ENCODE measurements at regions of chr5 and their contacts with region 1.

Region 1: DNA sequence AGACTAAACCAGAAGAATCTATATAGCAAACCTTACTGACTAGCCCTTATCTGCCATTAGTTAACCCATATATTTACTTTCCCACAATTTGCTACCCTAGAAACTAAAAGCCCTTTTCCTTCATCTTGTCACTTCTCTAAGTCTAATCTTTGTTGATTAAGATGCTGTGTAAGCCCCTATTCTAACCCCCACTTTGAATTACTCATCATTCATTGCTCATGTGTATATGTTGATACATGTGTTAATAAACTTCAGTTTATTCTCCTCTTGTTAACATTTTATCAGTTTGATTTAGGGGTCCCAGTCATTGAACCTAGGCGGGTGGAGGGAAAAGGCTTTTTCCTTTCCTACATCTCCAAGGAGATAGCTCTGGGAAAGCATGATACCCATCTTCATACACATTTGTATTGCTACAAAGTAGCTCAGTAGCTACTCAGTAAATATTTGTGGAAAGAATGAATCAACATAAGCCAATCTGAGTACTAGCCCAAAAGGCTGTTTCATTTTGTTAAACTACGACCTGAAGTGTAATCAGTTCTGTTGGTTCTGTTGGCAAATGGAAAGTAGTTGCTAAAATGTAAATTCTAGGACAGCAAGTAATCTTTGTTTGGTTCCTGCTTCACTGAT is 35.1 kb upstream of the NDFIP1 start:
- DNase-seq: no peak
- H3K4me3 ChIP-seq: no peak overlapping the region
- H3K27ac ChIP-seq: no peak overlapping the region
- H3K4me1 ChIP-seq: no peaks in the 10 kb centered on the region
- H3K27me3 ChIP-seq: no peaks in the 10 kb centered on the region
- CTCF ChIP-seq: no peak
- EP300 ChIP-seq: no peak
- POLR2A ChIP-seq: no peak

Region 2: GRCh38 chr5:142366007-142366406 is 292.5 kb after region 1 on chr5:
- in situ Hi-C with region 1: no loop called
- intact Hi-C with region 1: no loop called
- DNase-seq: no peak
- H3K4me3 ChIP-seq: no peak overlapping the region
- H3K27ac ChIP-seq: no peak overlapping the region
- H3K4me1 ChIP-seq: peaks cover 3 to 12% (median 10%) of the 10 kb centered on the region in 4 donors
- H3K27me3 ChIP-seq: no peaks in the 10 kb centered on the region
- CTCF ChIP-seq: no peak
- EP300 ChIP-seq: no peak
- POLR2A ChIP-seq: no peak

Region 3: GRCh38 chr5:142386137-142387032 is 312.9 kb after region 1 on chr5:
- in situ Hi-C with region 1: no loop called
- intact Hi-C with region 1: no loop called
- DNase-seq: no peak
- H3K4me3 ChIP-seq: no peak overlapping the region
- H3K27ac ChIP-seq: no peak overlapping the region
- H3K4me1 ChIP-seq: peaks cover 6 to 22% (median 15%) of the 10 kb centered on the region in 4 donors
- H3K27me3 ChIP-seq: no peaks in the 10 kb centered on the region
- CTCF ChIP-seq: no peak
- EP300 ChIP-seq: no peak
- POLR2A ChIP-seq: no peak

Region 4: DNA sequence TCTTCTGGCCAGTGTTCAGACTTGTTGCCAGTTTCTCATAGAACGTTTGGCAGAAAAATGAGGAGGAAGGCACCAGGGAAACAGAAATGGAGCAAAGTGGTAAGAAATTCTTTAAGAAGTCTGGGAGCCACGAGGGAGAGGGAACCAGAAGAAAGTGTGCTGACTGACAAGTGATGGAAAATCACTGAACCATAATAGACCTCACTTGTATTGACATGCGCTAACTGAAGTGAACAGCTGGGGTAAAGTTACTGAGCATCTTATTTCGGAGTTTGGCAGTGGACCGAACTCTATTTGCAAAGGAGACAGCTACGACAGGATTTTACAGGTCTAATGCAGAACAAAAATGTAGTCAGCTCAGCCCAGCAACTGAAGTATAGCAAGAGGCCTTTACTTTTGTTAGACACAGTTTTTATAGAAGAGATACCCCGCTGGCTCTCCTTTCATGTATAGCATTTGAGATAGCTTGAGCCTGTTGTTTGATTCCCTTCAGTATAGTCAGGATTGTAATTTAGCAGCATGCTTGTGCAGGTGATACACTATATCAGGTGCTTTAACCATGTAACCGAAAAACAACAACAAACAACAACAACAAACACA is 1792.1 kb after region 1 on chr5:
- in situ Hi-C with region 1: no loop called
- intact Hi-C with region 1: loop called (anchors 5 kb)
- DNase-seq: no peak
- H3K4me3 ChIP-seq: no peak overlapping the region
- H3K27ac ChIP-seq: no peak overlapping the region
- H3K4me1 ChIP-seq: no peaks in the 10 kb centered on the region
- H3K27me3 ChIP-seq: no peaks in the 10 kb centered on the region
- CTCF ChIP-seq: no peak
- EP300 ChIP-seq: no peak
- POLR2A ChIP-seq: no peak